Activated CD4-positive, alpha-beta T cell treated with anti-CD3 and anti-CD28 coated beads, Interleukin-2, amount 10 ng/mL, durations not matched to agents 7 days and 5 days (primary cell): ENCODE measurements at regions of chr6 and their contacts with region 1.

Region 1: DNA sequence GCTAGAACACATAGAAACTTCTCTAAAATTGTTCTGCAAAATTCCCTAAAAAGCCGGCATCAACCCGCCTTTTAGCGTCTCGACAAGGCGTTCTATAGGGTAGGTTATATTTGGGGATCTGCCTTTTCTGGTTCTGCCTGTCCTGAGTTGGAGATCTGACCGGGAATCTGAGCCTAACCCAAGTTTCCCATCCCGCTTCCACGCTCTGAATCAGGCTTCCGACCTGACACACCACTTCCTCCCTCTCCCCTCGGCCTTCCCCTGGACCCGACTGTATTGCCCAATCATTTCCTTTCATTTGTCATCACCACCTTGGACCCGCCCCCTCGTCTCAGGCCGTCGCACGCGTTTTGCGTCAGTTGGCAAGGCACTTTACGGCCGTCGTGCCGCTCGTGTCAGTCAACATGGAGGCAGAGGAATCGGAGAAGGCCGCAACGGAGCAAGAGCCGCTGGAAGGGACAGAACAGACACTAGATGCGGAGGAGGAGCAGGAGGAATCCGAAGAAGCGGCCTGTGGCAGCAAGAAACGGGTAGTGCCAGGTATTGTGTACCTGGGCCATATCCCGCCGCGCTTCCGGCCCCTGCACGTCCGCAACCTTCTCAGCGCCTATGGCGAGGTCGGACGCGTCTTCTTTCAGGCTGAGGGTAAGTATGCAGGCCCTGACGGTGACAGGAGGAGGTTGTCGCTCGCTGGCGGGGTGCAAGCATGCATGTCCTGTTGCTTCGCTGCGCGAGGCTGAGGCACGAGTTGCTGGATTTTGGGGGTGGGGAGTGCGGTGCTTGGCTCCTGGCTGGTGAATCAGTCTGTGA is at the start of gene ABT1:
- DNase-seq: peak; percentile 98
- H3K4me3 Mint-ChIP-seq: no peak within 1 kb of the TSS
- H3K27ac Mint-ChIP-seq: no peak within 1 kb of the TSS
- H3K4me1 Mint-ChIP-seq: peaks cover 37% of the 10 kb centered on the region
- H3K27me3 Mint-ChIP-seq: peaks cover 25% of the 10 kb centered on the region
- total RNA-seq, gene ABT1: 24.9 to 27.4 TPM

Region 2: GRCh38 chr6:26329763-26330511 is 266.8 kb before region 1 on chr6:
- CTCF ChIA-PET with region 1: interaction called, 11 read pairs
- POLR2A ChIA-PET with region 1: no interaction called
- DNase-seq: peak; percentile 54
- H3K4me3 Mint-ChIP-seq: peak overlapping the region; percentile 74
- H3K27ac Mint-ChIP-seq: peak overlapping the region; percentile 58
- H3K4me1 Mint-ChIP-seq: peaks cover 59% of the 10 kb centered on the region
- H3K27me3 Mint-ChIP-seq: peaks cover 39% of the 10 kb centered on the region

Region 3: GRCh38 chr6:26342106-26343004 is 254.4 kb before region 1 on chr6:
- CTCF ChIA-PET with region 1: interaction called, 16 read pairs
- POLR2A ChIA-PET with region 1: interaction called, 3 read pairs
- DNase-seq: no peak
- H3K4me3 Mint-ChIP-seq: peak overlapping the region; percentile 70
- H3K27ac Mint-ChIP-seq: peak overlapping the region; percentile 85
- H3K4me1 Mint-ChIP-seq: peaks cover 20% of the 10 kb centered on the region
- H3K27me3 Mint-ChIP-seq: peaks cover 18% of the 10 kb centered on the region

Region 4: DNA sequence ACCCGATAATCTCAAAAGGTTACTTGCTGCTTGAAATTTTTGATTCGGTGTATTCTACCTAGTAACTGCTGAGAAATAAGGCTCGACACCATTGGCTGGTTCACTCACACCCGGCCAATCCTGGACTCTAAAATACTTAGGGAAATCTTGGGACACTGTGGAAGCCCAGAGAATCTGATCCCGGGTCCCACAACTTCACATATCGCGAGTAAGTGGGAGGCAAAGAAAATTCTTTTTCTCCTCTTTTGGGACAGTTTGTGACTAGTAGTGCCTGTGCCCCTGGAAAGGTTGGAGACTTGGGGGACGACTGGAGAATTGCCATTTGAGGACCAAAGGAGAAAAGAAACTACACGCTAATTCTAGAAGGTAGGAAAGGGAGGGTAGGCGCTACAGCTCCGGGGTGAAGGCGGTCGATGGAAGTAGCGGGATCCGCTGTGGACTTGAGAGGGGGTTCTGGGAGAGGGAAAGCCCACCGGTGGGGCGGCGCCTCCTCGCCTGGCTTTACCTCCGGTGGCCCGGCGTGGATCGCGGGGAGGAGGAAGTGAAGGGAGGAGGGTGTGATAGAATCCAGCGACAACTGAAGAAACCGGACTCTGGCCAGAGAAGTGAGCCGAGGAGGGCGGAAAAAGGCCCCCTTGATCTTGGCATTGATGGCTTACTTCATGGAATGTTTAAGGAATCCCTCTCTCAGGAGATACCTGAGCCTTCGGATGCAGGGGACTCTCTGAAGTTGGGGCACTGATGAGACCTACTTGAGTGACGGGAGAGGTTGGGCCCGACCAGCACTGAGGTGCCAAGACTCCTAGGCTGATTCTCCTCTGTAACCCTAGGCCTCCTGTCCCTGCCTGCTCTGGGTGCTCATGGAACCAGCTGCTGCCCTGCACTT is 175.3 kb before region 1 on chr6:
- CTCF ChIA-PET with region 1: no interaction called
- POLR2A ChIA-PET with region 1: no interaction called
- DNase-seq: peak; percentile 62
- H3K4me3 Mint-ChIP-seq: no peak overlapping the region
- H3K27ac Mint-ChIP-seq: no peak overlapping the region
- H3K4me1 Mint-ChIP-seq: peaks cover 6% of the 10 kb centered on the region
- H3K27me3 Mint-ChIP-seq: no peaks in the 10 kb centered on the region

Region 5: GRCh38 chr6:26553635-26554446 is 42.9 kb before region 1 on chr6:
- CTCF ChIA-PET with region 1: interaction called, 16 read pairs
- POLR2A ChIA-PET with region 1: no interaction called
- DNase-seq: peak; percentile 78
- H3K4me3 Mint-ChIP-seq: no peak overlapping the region
- H3K27ac Mint-ChIP-seq: no peak overlapping the region
- H3K4me1 Mint-ChIP-seq: peaks cover 22% of the 10 kb centered on the region
- H3K27me3 Mint-ChIP-seq: peaks cover 3% of the 10 kb centered on the region

Region 6: DNA sequence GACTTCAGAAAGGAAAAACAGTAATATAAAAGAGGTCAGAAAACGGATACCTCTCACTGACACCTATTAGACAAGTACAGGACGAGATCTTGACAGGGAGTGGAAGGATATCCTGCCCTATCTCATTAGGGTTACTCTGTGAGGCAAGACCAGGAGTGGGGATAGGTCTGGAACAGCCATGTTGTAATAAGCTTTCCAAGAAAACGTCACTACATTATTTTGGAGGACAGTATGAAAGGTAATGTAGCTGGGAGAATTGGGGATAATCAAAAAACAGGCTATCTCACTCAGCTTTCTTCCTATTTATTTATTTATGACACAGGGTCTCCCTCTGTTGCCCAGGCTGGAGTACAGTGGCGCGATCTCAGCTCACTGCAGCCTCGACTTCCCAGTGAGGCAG is 33.3 kb before region 1 on chr6:
- CTCF ChIA-PET with region 1: interaction called, 12 read pairs
- POLR2A ChIA-PET with region 1: no interaction called
- DNase-seq: no peak
- H3K4me3 Mint-ChIP-seq: no peak overlapping the region
- H3K27ac Mint-ChIP-seq: no peak overlapping the region
- H3K4me1 Mint-ChIP-seq: peaks cover 7% of the 10 kb centered on the region
- H3K27me3 Mint-ChIP-seq: peaks cover 12% of the 10 kb centered on the region

Region 7: DNA sequence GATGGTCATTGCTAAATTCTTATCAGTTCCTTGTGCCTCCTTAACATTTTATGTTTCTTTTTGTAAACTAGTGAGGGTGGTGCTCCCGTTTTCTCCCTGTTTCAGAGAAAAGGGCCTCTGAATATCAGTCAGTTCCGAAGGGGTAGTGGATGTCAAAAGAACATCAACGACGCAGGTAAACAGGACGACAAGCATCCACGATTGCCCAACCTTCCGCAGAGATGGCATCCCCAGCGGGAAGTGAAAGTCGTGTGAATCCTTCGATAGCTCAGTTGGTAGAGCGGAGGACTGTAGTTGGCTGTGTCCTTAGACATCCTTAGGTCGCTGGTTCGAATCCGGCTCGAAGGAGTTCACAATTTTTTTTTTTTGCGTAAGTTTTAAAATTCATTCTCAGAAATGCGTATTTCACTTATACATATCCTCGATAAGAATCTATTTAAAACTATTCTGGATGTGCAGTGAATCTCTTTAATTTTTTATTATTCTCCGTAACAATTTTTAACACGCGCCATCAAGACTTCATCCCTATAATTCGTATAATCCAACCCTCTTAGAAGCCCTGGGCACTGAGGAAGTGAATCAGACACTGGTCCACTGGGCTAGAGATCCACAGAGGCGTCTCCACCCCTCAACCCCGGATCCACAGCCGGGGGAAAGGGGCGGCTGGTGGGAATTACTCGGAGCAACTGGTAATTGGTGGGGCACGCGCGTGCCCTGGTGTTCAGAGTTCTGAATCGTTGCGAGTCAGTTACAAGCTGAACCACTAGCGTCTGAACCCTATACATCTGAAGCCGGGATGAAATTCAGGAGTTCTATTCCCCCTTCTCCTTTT is 28.0 kb before region 1 on chr6:
- CTCF ChIA-PET with region 1: interaction called, 20 read pairs
- POLR2A ChIA-PET with region 1: no interaction called
- DNase-seq: peak; percentile 97
- H3K4me3 Mint-ChIP-seq: peak overlapping the region; percentile 90
- H3K27ac Mint-ChIP-seq: peak overlapping the region; percentile 94
- H3K4me1 Mint-ChIP-seq: peaks cover 41% of the 10 kb centered on the region
- H3K27me3 Mint-ChIP-seq: peaks cover 7% of the 10 kb centered on the region

Region 8: DNA sequence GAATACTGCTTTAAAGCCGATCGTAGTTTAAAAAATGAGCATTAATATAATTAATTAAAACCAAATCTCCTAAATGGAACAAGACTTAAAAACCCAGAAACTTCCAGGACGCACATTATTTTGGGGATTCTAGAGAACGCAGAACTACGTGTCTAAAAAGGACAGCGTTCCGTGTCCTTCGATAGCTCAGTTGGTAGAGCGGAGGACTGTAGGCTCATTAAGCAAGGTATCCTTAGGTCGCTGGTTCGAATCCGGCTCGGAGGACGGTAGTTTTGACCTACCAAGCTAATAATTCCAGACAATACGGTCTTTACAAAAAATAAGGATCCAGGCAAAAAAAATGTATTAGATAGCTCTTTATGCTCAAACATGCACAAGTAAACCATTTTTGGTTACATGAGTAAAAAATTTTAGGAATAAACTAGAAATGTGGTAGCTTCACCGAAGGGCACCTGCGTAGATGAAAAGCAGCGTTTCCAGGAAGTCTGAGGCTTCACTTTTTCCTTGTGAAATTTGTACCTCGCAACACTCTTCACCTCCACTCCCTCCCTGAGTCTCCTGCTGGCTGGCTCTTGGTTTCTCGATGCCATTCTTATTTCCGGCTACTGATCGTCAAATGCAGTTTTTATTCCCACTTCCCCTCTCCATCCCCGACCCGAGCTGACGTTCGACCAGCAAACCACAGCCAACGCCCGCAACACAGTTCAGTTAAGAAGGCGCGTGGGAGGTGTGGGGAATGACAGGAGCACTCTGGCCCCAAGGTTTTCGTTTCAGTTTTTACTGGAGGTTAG is 19.7 kb before region 1 on chr6:
- CTCF ChIA-PET with region 1: interaction called, 42 read pairs
- POLR2A ChIA-PET with region 1: interaction called, 3 read pairs
- DNase-seq: peak; percentile 43
- H3K4me3 Mint-ChIP-seq: peak overlapping the region; percentile 65
- H3K27ac Mint-ChIP-seq: peak overlapping the region; percentile 10
- H3K4me1 Mint-ChIP-seq: peaks cover 30% of the 10 kb centered on the region
- H3K27me3 Mint-ChIP-seq: peaks cover 24% of the 10 kb centered on the region